Heart left ventricle (tissue), 16 donors: ENCODE measurements at regions of chr6 and their contacts with region 1.

Region 1: GRCh38 chr6:134882426-134883038 is 67.4 kb downstream of the ALDH8A1 start:
- DNase-seq: peak in 4 of 5 donors; percentile 21 to 67 (median 49)
- ATAC-seq: peak in 3 of 4 donors; percentile 36 to 68 (median 65)
- H3K4me3 ChIP-seq: no peak overlapping the region
- H3K27ac ChIP-seq: no peak overlapping the region
- H3K4me1 ChIP-seq: peaks cover 0 to 5% (median 0%) of the 10 kb centered on the region in 12 donors
- H3K27me3 ChIP-seq: peaks cover 0 to 3% (median 0%) of the 10 kb centered on the region in 9 donors
- CTCF ChIP-seq: peak; percentile 52 to 99 (median 88)
- POLR2A ChIP-seq: no peak

Region 2: DNA sequence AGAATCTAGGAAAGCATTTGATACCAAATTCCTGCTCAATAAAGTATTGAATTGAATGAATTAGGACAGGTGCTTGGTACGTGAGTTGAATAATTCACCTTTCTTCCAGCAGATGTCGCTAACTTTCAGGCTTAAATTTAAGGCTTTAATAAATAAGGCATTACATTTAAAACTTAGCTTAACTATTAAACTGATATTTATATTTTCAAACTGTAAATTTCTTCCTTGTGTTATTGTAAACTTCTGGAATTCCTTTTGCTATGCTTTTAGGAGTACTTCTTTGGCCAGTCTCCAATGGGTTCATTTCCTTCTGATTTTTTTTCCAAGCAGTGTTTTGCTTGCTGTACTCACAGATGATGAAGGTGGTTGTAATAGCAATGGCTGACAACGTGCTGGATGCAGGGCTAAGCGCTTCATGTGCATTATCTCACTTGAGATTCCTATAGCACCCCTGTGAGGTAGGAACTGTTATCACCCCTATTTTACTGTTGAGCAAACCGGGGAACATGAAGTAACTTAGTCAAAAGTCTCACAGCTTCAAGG is 758.8 kb before region 1 on chr6:
- intact Hi-C with region 1: loop called in 4 of 10 experiments (anchors 2 to 5 kb)
- DNase-seq: no peak
- ATAC-seq: no peak
- H3K4me3 ChIP-seq: no peak overlapping the region
- H3K27ac ChIP-seq: no peak overlapping the region
- H3K4me1 ChIP-seq: peaks cover 0 to 4% (median 0%) of the 10 kb centered on the region in 12 donors
- H3K27me3 ChIP-seq: no peaks in the 10 kb centered on the region
- CTCF ChIP-seq: peak; percentile 62 to 82 (median 74)
- POLR2A ChIP-seq: peak in 1 of 2 donors; percentile 5

Region 3: GRCh38 chr6:134161036-134161435 is 721.5 kb before region 1 on chr6:
- intact Hi-C with region 1: loop called in 8 of 10 experiments (anchors 1 to 5 kb)
- DNase-seq: no peak
- ATAC-seq: no peak
- H3K4me3 ChIP-seq: no peak overlapping the region
- H3K27ac ChIP-seq: no peak overlapping the region
- H3K4me1 ChIP-seq: no peaks in the 10 kb centered on the region
- H3K27me3 ChIP-seq: no peaks in the 10 kb centered on the region
- CTCF ChIP-seq: no peak
- POLR2A ChIP-seq: no peak

Region 4: DNA sequence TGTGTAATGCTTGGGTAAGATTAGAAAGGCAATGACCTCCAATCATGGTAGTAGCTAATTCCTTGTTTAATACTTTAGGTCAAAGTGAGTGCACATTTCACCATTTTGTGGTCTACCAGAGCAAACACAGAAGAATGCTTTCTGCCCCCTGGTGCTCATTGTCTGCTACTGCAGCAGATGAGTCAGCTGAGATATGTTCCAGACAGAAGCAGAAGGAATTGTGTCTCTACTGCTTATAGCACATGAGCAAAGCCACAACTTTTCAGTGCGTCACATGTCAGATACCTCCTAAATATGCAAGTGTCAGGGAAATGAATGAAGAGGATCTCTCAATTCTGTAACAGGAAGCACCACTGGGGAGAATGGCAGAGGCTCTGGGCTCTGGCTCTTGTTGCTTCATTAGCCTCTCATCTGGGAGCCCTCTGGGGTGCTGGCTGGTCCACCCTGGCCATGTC is 241.5 kb before region 1 on chr6:
- intact Hi-C with region 1: loop called in 1 of 10 experiments (anchors 10 kb)
- DNase-seq: peak; percentile 67 to 78 (median 77)
- ATAC-seq: peak; percentile 85 to 92 (median 89)
- H3K4me3 ChIP-seq: no peak overlapping the region
- H3K27ac ChIP-seq: peak overlapping the region in 3 of 12 donors; percentile 9 to 53 (median 36)
- H3K4me1 ChIP-seq: peaks cover 0 to 27% (median 6%) of the 10 kb centered on the region in 12 donors
- H3K27me3 ChIP-seq: no peaks in the 10 kb centered on the region
- CTCF ChIP-seq: peak; percentile 89 to 99 (median 94)
- POLR2A ChIP-seq: no peak

Region 5: DNA sequence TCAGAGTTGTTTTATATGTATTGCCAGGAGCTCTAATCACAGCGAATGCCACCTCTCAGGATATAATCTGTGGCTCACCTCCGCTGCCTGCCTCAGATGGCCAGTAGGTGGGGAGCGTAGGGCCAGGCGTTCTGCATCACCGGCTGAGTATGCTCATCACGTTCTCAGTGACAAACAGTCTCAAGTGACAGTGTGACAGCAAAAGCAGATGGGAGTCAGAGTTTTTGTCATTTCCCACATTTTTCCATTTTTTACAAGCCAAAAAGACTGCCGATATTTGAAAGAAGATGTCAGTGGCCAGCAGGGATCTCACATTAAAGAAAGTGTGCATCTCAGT is 141.4 kb before region 1 on chr6:
- intact Hi-C with region 1: no loop called
- DNase-seq: no peak
- ATAC-seq: peak in 2 of 4 donors; percentile 33 to 44
- H3K4me3 ChIP-seq: peak overlapping the region in 4 of 12 donors; percentile 7 to 19 (median 14)
- H3K27ac ChIP-seq: peak overlapping the region in 4 of 12 donors; percentile 15 to 47 (median 33)
- H3K4me1 ChIP-seq: peaks cover 0 to 23% (median 6%) of the 10 kb centered on the region in 12 donors
- H3K27me3 ChIP-seq: no peaks in the 10 kb centered on the region
- CTCF ChIP-seq: peak in 5 of 12 donors; percentile 13 to 34 (median 19)
- POLR2A ChIP-seq: no peak